Calu3 (cell line): ENCODE measurements at regions of chr5 and their contacts with region 1.

Region 1: DNA sequence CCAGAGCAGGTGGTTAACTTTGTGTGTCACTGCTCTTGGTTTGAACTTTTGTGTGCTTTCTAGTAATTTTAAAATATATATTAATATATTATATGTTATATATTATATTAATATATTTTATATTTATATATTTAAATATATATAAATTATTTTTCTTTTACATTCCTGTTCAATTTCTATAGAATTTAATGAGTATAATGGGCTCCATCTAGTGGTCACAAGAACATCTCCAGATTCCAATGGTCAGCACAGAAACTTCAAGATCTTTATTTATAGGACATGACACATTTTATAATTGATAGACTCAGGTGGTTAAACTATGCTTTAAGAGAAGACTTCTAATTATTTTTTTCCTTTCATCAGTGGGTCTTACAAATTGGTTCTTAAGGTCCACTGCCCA is 39.1 kb downstream of the COL23A1 start:
- DNase-seq: no peak
- H3K4me3 Mint-ChIP-seq: no peak overlapping the region
- H3K27ac Mint-ChIP-seq: no peak overlapping the region
- H3K4me1 Mint-ChIP-seq: no peaks in the 10 kb centered on the region
- H3K27me3 Mint-ChIP-seq: no peaks in the 10 kb centered on the region
- CTCF ChIP-seq: no peak

Region 2: DNA sequence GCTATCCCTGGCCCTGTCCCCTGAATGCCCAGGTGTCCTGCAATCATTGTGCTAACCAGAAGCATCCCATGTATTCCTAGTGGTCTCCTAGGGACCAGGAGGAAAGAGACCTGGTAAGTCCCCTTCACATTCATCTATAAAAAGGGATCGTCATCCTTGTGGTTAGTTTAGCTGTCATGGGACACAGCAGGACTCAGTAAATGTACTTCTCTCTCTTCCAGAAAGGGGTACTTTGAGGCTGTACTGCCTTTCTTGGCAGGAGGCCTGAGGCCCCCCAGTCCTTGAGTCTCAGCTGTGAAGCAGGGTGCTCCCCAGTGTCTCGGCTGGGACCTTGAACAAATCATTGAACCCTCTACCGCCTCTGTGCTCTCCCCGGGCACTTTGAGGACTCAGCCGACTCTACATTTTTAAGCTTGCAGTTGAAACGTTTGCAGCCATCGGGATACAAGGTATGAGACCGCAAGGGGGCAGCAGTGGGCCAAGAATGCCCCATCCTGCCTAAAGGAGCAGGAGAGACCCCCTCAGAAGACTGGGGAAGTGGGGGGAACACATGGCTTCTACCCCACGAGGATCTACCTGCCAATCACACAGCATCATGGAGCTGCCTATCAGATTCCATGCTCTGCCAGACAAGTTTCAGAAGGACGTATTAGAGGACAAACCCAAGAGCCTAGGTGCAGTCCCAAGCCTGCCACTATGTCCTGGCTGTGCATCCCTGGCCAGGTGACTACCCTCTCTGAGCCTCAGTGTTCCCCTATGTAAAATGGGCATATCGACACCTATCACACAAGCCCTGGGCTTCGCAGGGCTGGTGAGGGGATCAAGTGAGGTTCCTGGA is 316.1 kb before region 1 on chr5:
- CTCF ChIA-PET with region 1: no interaction called
- intact Hi-C with region 1: loop called (anchors 1 kb)
- DNase-seq: peak; percentile 82
- H3K4me3 Mint-ChIP-seq: no peak overlapping the region
- H3K27ac Mint-ChIP-seq: no peak overlapping the region
- H3K4me1 Mint-ChIP-seq: peaks cover 21% of the 10 kb centered on the region
- H3K27me3 Mint-ChIP-seq: no peaks in the 10 kb centered on the region
- CTCF ChIP-seq: peak; percentile 94

Region 3: GRCh38 chr5:178279725-178280438 is 271.2 kb before region 1 on chr5:
- CTCF ChIA-PET with region 1: interaction called, 3 read pairs
- intact Hi-C with region 1: loop called (anchors 1 kb)
- DNase-seq: peak; percentile 94
- H3K4me3 Mint-ChIP-seq: peak overlapping the region; percentile 26
- H3K27ac Mint-ChIP-seq: no peak overlapping the region
- H3K4me1 Mint-ChIP-seq: peaks cover 12% of the 10 kb centered on the region
- H3K27me3 Mint-ChIP-seq: peaks cover 79% of the 10 kb centered on the region
- CTCF ChIP-seq: peak; percentile 85